ENCODE measurements at regions of chr5 and their contacts with region 1.

Region 1: DNA sequence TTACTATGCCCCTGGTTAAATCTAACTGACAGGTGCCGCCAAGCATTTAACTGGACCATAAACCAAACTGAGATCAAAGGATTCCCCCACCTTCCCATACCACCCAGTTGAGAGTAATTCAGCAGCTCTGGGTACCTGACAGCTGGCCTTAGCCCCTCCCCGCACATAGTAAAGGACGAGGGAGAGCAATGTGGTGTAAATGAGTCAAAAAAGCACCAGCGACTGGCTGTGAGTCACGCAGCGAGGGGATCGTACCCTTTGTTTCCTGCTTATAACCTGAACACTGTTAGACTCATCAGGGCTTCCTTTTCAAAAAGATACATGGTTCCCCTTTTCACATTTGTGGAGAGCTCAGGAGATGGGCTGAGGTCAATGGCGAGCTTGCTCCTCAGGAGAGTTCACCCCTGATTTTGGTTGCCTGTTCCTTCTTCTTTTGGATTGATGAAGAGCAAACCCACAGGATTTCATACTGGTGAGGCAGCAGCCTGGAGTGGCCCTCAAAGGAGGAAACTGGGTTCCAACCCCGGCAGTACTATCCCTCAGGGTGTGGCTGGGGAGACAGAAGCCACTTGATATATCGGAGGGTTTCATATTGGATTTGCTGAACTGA is 71.5 kb downstream of the ANKRD33B start:
- DNase-seq: peak; percentile 93
- H3K4me3 Mint-ChIP-seq: peak overlapping the region; percentile 77
- H3K27ac Mint-ChIP-seq: peak overlapping the region; percentile 98
- H3K4me1 Mint-ChIP-seq: peaks cover 62% of the 10 kb centered on the region
- H3K27me3 Mint-ChIP-seq: no peaks in the 10 kb centered on the region

Region 2: DNA sequence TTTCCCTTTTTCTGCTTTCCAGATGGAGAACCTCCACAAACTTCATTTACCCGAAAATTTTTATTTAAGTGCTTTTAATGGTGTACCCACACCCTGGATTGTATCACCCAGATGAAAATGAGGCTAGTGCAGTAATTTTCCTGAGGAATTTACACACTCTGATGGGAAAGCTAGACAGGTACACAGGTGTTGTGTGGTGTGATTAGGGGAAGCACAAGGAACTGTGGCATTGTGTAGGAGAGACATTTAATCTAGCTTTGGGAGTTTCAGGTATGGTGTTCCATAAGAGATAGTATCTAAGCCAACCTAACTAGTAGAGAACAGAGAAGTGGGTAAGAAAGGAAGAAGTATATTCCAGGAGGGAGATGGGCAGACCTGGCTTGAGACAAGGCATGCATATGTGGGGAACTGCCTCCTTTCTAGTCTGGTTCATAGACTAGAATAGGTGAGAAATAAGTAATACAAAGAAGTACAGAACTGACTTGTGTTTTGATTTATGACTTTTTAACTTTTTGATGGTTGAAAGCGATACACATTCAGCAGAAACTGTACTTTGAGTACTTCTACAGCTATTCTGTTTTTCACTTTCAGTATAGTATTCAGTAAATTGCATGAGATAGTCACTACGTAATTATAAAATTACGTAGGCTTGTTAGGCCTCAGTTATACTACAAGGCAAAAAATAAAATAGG is 216.6 kb before region 1 on chr5:
- CTCF ChIA-PET with region 1: interaction called, 3 read pairs
- POLR2A ChIA-PET with region 1: no interaction called
- intact Hi-C with region 1: loop called (anchors 1 kb)
- DNase-seq: no peak
- H3K4me3 Mint-ChIP-seq: no peak overlapping the region
- H3K27ac Mint-ChIP-seq: peak overlapping the region; percentile 32
- H3K4me1 Mint-ChIP-seq: peaks cover 43% of the 10 kb centered on the region
- H3K27me3 Mint-ChIP-seq: no peaks in the 10 kb centered on the region

Region 3: GRCh38 chr5:10563945-10564837 is 71.2 kb before region 1 on chr5 and contains the start of gene ANKRD33B:
- CTCF ChIA-PET with region 1: no interaction called
- POLR2A ChIA-PET with region 1: interaction called, 5 read pairs
- intact Hi-C with region 1: loop called (anchors 2 kb)
- DNase-seq: peak; percentile 88
- H3K4me3 Mint-ChIP-seq: peak within 1 kb of the TSS; percentile 84
- H3K27ac Mint-ChIP-seq: peak within 1 kb of the TSS; percentile 79
- H3K4me1 Mint-ChIP-seq: peaks cover 21% of the 10 kb centered on the region
- H3K27me3 Mint-ChIP-seq: peaks cover 3% of the 10 kb centered on the region
- total RNA-seq, gene ANKRD33B: 9.9 to 10.0 TPM

Region 4: GRCh38 chr5:10595678-10596309 is 39.6 kb before region 1 on chr5:
- CTCF ChIA-PET with region 1: interaction called, 4 read pairs
- POLR2A ChIA-PET with region 1: no interaction called
- intact Hi-C with region 1: loop called (anchors 2 kb)
- DNase-seq: peak; percentile 77
- H3K4me3 Mint-ChIP-seq: no peak overlapping the region
- H3K27ac Mint-ChIP-seq: peak overlapping the region; percentile 50
- H3K4me1 Mint-ChIP-seq: peaks cover 48% of the 10 kb centered on the region
- H3K27me3 Mint-ChIP-seq: no peaks in the 10 kb centered on the region

Region 5: DNA sequence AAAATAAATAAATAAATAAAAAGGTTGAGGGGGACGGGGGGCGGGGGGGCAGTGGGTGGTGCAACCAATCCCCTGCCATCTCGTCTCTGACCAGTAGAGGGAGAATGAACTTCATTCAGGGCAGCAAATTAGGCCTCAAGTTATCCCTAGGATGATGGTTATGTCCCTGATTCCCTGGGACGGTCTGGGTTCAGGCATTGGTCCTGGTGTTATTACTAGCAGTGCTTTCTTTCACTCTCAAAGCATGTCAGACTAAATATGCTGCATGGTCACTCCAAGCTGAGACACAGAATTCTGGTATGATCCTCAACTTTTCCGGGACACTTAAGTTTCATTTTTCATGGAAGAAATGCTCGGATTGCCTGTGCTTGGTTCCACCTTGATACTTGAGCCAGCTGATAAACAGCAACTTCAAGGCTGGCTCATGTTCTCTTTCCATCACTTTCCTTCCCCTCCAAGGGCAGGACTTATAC is 66.2 kb after region 1 on chr5:
- CTCF ChIA-PET with region 1: no interaction called
- POLR2A ChIA-PET with region 1: no interaction called
- intact Hi-C with region 1: loop called (anchors 5 kb)
- DNase-seq: peak; percentile 27
- H3K4me3 Mint-ChIP-seq: no peak overlapping the region
- H3K27ac Mint-ChIP-seq: no peak overlapping the region
- H3K4me1 Mint-ChIP-seq: peaks cover 38% of the 10 kb centered on the region
- H3K27me3 Mint-ChIP-seq: no peaks in the 10 kb centered on the region